H1 (cell line): ENCODE measurements at regions of chr15 and their contacts with region 1.

Region 1: GRCh38 chr15:45126535-45127158 is 3.0 kb downstream of the DUOXA1 start:
- DNase-seq: no peak
- H3K4me3 ChIP-seq: no peak overlapping the region
- H3K27ac ChIP-seq: no peak overlapping the region
- H3K4me1 ChIP-seq: peaks cover 0 to 6% (median 2%) of the 10 kb centered on the region in 4 experiments; a peak in 4 of 7 replicates
- H3K27me3 ChIP-seq: peaks cover 45 to 75% (median 56%) of the 10 kb centered on the region in 4 experiments
- CTCF ChIP-seq: peak in 2 of 3 experiments; percentile 48 to 52; a peak in 2 of 4 replicates
- EP300 ChIP-seq: no peak
- POLR2A ChIP-seq: no peak
- RAD21 ChIP-seq: peak; percentile 39 to 58; a peak in 3 of 4 replicates

Region 2: DNA sequence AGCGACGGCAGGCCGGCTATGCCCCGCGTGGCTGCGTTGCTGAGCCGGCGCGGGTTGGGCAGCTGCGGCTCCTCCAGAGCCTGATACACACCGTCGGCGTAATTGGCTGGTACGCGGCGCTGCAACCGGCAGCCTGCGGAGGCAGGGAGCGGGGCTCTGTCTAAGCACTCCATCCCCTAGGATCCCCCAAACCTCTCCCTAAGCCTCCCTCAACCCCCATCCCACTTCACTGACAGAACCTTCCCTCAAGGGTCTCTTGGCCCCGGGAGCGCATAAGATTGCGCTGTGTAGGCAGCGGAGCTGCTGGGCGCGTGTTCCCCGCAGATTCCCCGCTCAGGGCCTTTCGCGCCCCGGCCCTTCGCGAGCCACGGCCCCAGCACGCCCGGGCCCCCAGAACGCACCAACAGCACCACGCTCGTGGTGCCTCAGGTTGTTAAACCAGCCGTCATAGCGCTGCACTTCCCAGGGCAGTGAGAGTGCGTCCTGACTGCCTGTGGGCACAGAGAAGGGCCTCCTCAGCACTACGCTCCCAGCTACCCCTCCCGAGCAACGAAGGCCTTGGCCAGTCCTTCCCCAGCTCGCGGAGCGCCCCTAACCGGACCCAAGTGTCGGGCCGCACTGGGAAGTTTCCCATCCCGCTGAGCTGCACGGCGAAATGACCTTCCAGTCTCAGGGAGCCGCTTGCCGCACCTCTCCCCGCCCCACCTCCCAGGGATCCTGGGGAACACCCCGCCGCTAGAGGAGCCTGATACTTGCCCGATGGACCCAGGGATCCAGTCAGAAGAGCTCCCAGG is 13.9 kb before region 1 on chr15:
- CTCF ChIA-PET with region 1: interaction called, 45 read pairs
- POLR2A ChIA-PET with region 1: no interaction called
- DNase-seq: peak in 1 of 2 experiments; percentile 78
- H3K4me3 ChIP-seq: peak overlapping the region; percentile 4 to 57 (median 25); a peak in 7 of 8 replicates
- H3K27ac ChIP-seq: no peak overlapping the region
- H3K4me1 ChIP-seq: peaks cover 0 to 31% (median 24%) of the 10 kb centered on the region in 4 experiments; a peak in 6 of 7 replicates
- H3K27me3 ChIP-seq: peaks cover 82 to 90% (median 88%) of the 10 kb centered on the region in 4 experiments
- CTCF ChIP-seq: no peak
- EP300 ChIP-seq: no peak
- POLR2A ChIP-seq: no peak
- RAD21 ChIP-seq: no peak

Region 3: GRCh38 chr15:45146405-45146804 is 19.8 kb after region 1 on chr15:
- CTCF ChIA-PET with region 1: interaction called, 57 read pairs
- POLR2A ChIA-PET with region 1: interaction called, 6 read pairs
- DNase-seq: no peak
- H3K4me3 ChIP-seq: no peak overlapping the region
- H3K27ac ChIP-seq: no peak overlapping the region
- H3K4me1 ChIP-seq: no peaks in the 10 kb centered on the region; a peak in 1 of 7 replicates
- H3K27me3 ChIP-seq: no peaks in the 10 kb centered on the region; a peak in 1 of 7 replicates
- CTCF ChIP-seq: no peak
- EP300 ChIP-seq: no peak
- POLR2A ChIP-seq: no peak
- RAD21 ChIP-seq: no peak

Region 4: GRCh38 chr15:45648521-45649200 is 522.0 kb after region 1 on chr15:
- CTCF ChIA-PET with region 1: no interaction called
- POLR2A ChIA-PET with region 1: no interaction called
- DNase-seq: no peak
- H3K4me3 ChIP-seq: no peak overlapping the region
- H3K27ac ChIP-seq: no peak overlapping the region
- H3K4me1 ChIP-seq: no peaks in the 10 kb centered on the region
- H3K27me3 ChIP-seq: no peaks in the 10 kb centered on the region
- CTCF ChIP-seq: no peak
- EP300 ChIP-seq: no peak
- POLR2A ChIP-seq: no peak
- RAD21 ChIP-seq: no peak